Motor neuron (in vitro differentiated cells): ENCODE measurements at regions of chr22 and their contacts with region 1.

Region 1: DNA sequence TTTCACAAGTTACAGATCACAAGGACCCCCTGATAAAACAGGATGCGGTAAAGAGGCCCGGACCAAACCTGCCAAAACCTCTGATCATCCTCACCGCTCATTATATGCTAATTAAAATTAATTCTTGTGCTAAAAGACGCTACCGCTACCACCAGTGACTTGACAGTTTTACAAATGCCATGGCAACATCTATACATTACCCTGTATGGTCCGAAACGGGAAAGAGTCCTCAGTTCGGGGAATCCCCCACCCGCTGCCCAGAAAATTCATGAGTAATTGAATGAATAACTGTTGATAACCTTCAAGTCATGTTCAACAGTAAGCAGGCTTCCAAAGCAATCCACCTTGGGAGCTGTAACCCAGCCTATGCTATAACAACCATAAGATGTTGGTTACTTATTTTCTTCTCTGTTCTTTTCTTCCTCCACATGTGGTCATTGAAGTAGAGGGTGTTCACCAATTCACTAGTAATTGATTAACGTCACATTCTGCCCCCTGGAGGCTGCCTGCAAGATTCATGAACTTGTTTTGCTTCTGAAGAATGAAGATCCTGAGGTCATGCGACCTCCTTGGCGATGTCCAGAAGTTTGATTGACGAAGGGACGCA is 20.6 kb downstream of the APOBEC3H start:
- ATAC-seq: peak in 2 of 8 experiments; percentile 36 to 66
- H3K4me3 ChIP-seq: no peak overlapping the region
- H3K27ac ChIP-seq: no peak overlapping the region
- H3K4me1 ChIP-seq: peaks cover 19 to 24% of the 10 kb centered on the region in 2 donors

Region 2: DNA sequence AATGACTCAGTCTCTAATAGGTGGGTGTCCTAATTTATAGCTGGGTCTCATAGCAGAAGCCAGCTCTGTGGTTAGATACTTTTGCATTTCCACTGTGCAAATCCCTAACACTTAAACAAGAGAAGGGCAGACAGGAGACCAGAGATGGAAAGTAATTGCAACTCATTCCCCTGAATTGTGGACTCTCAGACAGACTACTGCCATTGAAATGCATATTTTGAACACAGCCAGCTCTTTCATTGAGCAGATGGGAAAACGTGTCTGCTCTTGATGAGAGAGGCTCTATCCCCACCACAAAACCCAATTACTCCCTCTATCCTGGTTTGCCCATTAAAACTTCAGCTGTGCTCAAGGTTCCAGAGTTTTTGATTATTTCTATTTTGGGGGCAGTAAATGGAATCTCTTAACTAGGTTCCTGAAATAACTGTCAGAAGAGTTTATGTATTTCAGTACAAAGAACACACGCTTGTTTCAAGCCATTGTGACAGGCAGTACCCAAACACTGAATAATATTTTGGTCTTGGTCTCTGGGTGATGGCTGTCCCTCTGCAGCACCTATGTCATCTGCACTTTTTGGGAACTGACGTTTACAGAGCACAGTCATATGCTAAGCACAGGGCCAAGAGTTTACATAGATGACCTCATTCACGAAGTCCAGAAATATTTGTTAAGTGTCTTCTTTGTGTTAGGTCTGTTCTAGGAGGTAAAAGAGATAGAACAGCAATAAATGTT is 503.2 kb before region 1 on chr22:
- in situ Hi-C with region 1: no loop called
- ATAC-seq: peak in 7 of 8 experiments; percentile 13 to 97 (median 71)
- H3K4me3 ChIP-seq: no peak overlapping the region
- H3K27ac ChIP-seq: peak overlapping the region in 1 of 2 donors; percentile 36
- H3K4me1 ChIP-seq: peaks cover 7 to 11% of the 10 kb centered on the region in 2 donors

Region 3: GRCh38 chr22:38872172-38872830 is 245.4 kb before region 1 on chr22 and contains the start of gene CBX6:
- in situ Hi-C with region 1: loop called in 3 of 9 experiments (anchors 25 kb)
- ATAC-seq: peak; percentile 58 to 82 (median 77)
- H3K4me3 ChIP-seq: peak within 1 kb of the TSS; percentile 75 to 99 (median 88)
- H3K27ac ChIP-seq: peak within 1 kb of the TSS; percentile 96 to 97
- H3K4me1 ChIP-seq: peaks cover 24 to 27% of the 10 kb centered on the region in 2 donors
- total RNA-seq, gene CBX6: 17.6 to 141 (median 36.6) TPM

Region 4: GRCh38 chr22:39003165-39003638 is 114.5 kb before region 1 on chr22:
- in situ Hi-C with region 1: loop called in 2 of 9 experiments (anchors 25 kb)
- ATAC-seq: peak; percentile 85 to 99 (median 94)
- H3K4me3 ChIP-seq: no peak overlapping the region
- H3K27ac ChIP-seq: no peak overlapping the region
- H3K4me1 ChIP-seq: peaks cover 0 to 7% of the 10 kb centered on the region in 2 donors